A549 (cell line): ENCODE measurements at regions of chr14 and their contacts with region 1.

Region 1: DNA sequence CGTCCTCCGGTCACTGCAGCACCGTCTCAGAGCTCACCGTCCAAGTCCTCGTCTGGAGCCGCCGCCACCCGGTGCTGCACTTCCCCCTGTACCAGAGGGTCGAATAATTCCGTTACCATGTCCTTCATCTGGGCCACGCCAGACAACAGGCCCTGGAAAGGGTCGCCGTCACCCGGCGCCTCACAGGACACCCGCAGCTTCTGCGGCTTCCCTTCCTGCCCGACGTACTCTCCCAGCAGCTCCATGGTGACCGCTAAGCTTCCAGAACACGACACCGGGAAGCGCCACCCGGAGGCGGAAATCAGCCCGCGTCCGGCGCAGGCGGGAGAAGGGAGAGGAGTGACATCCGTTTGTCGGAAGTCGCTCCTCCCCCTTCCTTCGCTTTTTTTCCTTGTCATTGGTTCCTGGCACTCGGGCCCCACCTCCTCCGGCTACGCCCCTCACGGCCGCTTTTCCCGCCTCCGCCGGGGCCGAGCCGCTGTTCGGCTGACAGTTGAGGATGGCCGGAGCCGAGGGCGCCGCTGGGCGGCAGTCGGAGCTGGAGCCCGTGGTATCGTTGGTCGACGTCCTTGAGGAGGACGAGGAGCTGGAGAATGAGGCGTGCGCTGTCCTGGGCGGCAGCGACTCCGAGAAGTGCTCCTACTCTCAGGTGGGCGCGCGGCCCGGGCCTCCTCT is at the starts of genes GON7 and UBR7:
- DNase-seq: peak; percentile 90 to 97
- ATAC-seq: peak; percentile 94 to 96
- H3K4me3 ChIP-seq: peak within 1 kb of the TSS; percentile 69
- H3K27ac ChIP-seq: peak within 1 kb of the TSS; percentile 84 to 91
- H3K4me1 ChIP-seq: peaks cover 24% of the 10 kb centered on the region
- CTCF ChIP-seq: no peak
- EP300 ChIP-seq: no peak
- POLR2A ChIP-seq: peak; percentile 80
- RAD21 ChIP-seq: no peak
- polyA plus RNA-seq, gene GON7: 14.6 and 19.2 TPM in 2 replicates
- polyA plus RNA-seq, gene UBR7: 35.0 and 40.4 TPM in 2 replicates

Region 2: DNA sequence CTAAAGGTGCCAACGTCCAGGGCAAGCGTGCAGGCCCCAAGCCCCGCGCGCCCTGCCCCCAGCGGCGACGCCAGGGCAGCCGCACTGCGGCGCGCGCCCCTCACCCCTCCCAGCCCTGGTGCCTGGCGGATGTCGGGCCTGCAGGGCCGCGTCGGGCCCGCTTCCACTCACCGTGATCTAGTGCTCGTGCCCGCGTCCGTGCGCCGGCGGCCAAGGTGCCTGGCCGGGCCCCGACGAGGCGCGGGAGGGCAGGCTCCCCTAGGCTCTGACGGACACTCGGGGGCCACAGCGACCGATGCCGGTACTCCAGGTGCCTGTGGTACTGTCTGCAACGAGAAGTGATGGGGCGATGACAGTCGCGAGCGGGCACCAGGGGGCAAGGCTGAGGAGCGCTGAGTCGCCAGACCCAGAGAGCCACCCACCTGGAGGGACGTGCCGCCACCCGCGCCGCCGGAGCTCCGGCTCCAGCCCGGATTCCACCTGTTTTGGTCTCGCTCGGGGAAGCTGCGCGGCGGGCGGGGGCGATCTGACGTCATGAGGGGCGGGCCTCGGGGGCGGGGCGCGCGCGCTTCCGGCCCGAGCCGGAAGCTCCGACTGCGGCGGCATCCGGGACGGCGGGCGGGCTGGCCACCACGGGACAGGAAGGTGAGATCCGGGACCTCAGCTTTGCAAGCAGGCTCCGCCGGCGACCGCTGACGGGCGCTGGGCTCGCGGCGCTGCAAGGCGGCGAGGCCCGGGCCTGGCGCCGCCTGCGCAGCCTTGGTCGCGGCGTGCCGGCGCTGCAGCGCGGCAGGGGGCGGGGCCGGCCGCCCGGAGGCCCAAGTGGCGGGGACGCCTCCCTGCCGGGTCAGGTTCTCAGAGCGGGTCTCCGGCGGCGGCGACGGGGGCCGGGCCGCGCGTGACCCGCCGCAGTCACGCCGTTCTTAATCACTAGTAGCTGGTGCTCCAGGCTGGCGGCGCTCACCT is 22.3 kb before region 1 on chr14 and contains the starts of genes LYSET and MOAP1:
- CTCF ChIA-PET with region 1: interaction called, 24 read pairs
- POLR2A ChIA-PET with region 1: interaction called, 25 read pairs
- DNase-seq: peak; percentile 76 to 88
- ATAC-seq: peak; percentile 94
- H3K4me3 ChIP-seq: peak within 1 kb of the TSS; percentile 92
- H3K27ac ChIP-seq: peak within 1 kb of the TSS; percentile 93 to 96
- H3K4me1 ChIP-seq: peaks cover 7% of the 10 kb centered on the region
- CTCF ChIP-seq: no peak
- EP300 ChIP-seq: no peak
- POLR2A ChIP-seq: peak; percentile 67
- RAD21 ChIP-seq: no peak
- polyA plus RNA-seq, gene LYSET: 34.5 and 37.0 TPM in 2 replicates
- polyA plus RNA-seq, gene MOAP1: 18.0 and 23.9 TPM in 2 replicates

Region 3: DNA sequence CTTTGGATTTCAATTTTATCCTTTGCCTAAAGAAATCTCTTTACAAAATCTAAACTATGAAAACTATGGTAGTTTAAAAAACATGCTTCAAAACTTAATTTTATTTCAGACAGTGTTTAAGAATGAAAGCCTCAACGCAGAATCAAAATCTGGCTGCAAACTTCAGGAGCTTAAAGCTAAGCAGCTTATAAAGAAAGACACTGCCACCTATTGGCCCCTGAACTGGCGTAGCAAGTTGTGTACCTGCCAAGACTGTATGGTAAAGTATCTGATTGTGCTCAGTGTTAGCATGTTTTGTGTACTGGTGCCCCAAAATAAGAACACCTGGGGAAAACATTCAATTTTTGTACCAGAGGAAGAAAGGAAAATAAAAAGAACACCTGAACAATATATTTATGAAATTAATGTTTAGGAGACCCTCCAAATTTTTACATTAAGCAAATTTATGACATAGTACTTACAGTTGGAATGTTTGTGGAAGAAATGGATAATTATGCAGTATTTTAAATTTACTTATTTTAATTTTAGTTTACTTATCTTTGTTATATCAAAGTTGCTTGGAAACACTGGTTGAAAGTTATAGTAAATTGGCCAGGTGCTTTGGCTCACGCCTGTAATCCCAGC is 12.3 kb after region 1 on chr14:
- CTCF ChIA-PET with region 1: interaction called, 33 read pairs
- POLR2A ChIA-PET with region 1: interaction called, 6 read pairs
- DNase-seq: peak; percentile 54 to 80
- ATAC-seq: peak; percentile 94 to 95
- H3K4me3 ChIP-seq: no peak overlapping the region
- H3K27ac ChIP-seq: no peak overlapping the region
- H3K4me1 ChIP-seq: no peaks in the 10 kb centered on the region
- CTCF ChIP-seq: peak; percentile 72
- EP300 ChIP-seq: no peak
- POLR2A ChIP-seq: no peak
- RAD21 ChIP-seq: peak; percentile 68 to 72

Region 4: GRCh38 chr14:93231129-93231979 is 24.4 kb after region 1 on chr14:
- CTCF ChIA-PET with region 1: interaction called, 14 read pairs
- POLR2A ChIA-PET with region 1: interaction called, 9 read pairs
- DNase-seq: peak; percentile 51 to 78
- ATAC-seq: peak; percentile 78 to 84
- H3K4me3 ChIP-seq: peak overlapping the region; percentile 57
- H3K27ac ChIP-seq: peak overlapping the region; percentile 70 to 80
- H3K4me1 ChIP-seq: peaks cover 9% of the 10 kb centered on the region; the same call in 1 of the 3 replicates
- CTCF ChIP-seq: no peak
- EP300 ChIP-seq: no peak
- POLR2A ChIP-seq: 0 out of 2 replicates have a peak, but pooled peaks have one; percentile 18
- RAD21 ChIP-seq: no peak

Region 5: GRCh38 chr14:93543766-93544165 is 336.8 kb after region 1 on chr14:
- CTCF ChIA-PET with region 1: interaction called, 22 read pairs
- POLR2A ChIA-PET with region 1: no interaction called
- DNase-seq: peak; percentile 3 to 32
- ATAC-seq: peak; percentile 45 to 47; a peak in 2 of 6 replicates
- H3K4me3 ChIP-seq: no peak overlapping the region
- H3K27ac ChIP-seq: no peak overlapping the region
- H3K4me1 ChIP-seq: no peaks in the 10 kb centered on the region
- CTCF ChIP-seq: peak; percentile 58
- EP300 ChIP-seq: no peak
- POLR2A ChIP-seq: no peak
- RAD21 ChIP-seq: peak; percentile 62 to 67

Region 6: GRCh38 chr14:93549595-93549994 is 342.7 kb after region 1 on chr14:
- CTCF ChIA-PET with region 1: interaction called, 22 read pairs
- POLR2A ChIA-PET with region 1: no interaction called
- DNase-seq: no peak
- ATAC-seq: no peak
- H3K4me3 ChIP-seq: no peak overlapping the region
- H3K27ac ChIP-seq: no peak overlapping the region
- H3K4me1 ChIP-seq: no peaks in the 10 kb centered on the region
- CTCF ChIP-seq: no peak
- EP300 ChIP-seq: no peak
- POLR2A ChIP-seq: no peak
- RAD21 ChIP-seq: no peak